Common myeloid progenitor, CD34-positive (primary cell): ENCODE measurements at regions of chr7 and their contacts with region 1.

Region 1: DNA sequence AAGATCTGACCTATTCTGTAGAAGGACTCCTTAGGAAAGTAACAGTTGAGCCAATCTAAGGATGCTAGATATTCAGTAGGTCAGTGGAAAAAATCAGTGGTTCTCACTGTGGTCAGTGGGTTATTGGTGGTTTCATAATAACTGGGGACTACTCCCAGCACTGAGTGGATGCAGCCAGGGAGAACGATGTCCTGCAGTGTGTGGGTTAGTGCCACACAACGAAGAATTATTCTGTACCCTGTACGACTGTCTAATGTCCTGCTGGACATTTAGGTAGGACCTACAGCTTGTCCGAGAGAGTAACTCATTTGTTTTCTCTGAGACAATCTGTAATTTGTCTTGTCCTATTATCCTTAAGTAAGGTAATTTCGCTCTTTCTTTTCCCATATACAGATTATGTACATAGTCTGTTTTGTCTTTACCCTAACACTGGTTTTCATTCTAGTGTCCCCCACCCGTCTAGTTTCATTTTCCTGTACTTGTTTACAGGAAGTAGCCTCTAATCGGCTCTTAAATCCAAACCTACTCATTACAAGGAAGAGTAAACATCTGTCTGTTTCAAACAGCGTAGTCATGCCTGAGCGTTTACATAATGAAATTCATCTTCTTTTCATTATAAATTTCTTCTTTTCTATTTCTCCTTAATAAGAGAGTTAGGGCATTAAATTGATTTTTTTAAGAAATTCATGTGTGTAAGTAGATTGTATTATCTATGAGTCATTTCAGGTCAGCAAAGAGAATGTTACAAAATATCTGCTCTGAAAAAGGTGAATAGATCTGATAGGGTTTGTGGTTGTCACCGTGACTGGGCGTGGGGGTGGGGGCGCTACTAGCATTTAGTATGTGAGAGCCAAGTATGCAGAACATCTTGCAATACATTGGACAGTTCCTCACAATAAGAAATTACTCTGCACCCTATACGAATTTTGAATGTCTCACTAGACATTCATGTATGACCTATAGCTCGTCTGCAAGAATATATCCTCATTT is 8.3 kb upstream of the ZC3HAV1L start:
- DNase-seq: peak; percentile 83 to 92 (median 89)
- H3K4me3 ChIP-seq: peak overlapping the region in 3 of 7 experiments; percentile 21 to 47 (median 35)
- H3K27ac ChIP-seq: peak overlapping the region; percentile 57 to 83
- H3K4me1 ChIP-seq: peaks cover 16 to 50% (median 30%) of the 10 kb centered on the region in 4 experiments
- H3K27me3 ChIP-seq: no peaks in the 10 kb centered on the region

Region 2: DNA sequence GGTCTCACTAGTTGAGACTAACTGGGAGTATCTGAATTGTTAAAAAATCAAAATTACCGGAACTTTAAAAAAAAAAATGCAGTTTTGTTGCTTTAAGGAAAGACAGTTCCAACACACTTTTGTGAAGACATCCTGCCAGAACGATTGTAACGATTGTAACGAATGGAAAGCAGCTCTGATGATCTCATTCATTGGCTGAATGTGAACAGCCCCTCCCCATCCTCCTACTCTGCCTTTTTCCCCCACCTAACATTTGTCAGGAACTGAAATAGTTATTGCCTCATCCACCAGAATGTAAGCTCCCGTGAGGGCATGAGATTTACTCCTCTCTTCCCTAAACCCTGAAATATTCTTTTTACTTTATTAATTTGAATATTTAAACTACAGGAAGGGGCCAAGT is 14.8 kb after region 1 on chr7:
- CTCF ChIA-PET with region 1: interaction called, 10 read pairs
- POLR2A ChIA-PET with region 1: interaction called, 6 read pairs
- DNase-seq: no peak
- H3K4me3 ChIP-seq: no peak overlapping the region
- H3K27ac ChIP-seq: no peak overlapping the region
- H3K4me1 ChIP-seq: peaks cover 0 to 8% (median 5%) of the 10 kb centered on the region in 4 experiments
- H3K27me3 ChIP-seq: no peaks in the 10 kb centered on the region